ENCODE measurements at regions of chr17 and their contacts with region 1.

Region 1: GRCh38 chr17:78082988-78083387 is 45.6 kb downstream of the TMC6 start:
- DNase-seq: no peak
- ATAC-seq: no peak
- H3K4me3 ChIP-seq: no peak overlapping the region
- H3K27ac ChIP-seq: no peak overlapping the region
- H3K4me1 ChIP-seq: no peaks in the 10 kb centered on the region
- H3K27me3 ChIP-seq: no peaks in the 10 kb centered on the region
- CTCF ChIP-seq: no peak
- EP300 ChIP-seq: no peak
- POLR2A ChIP-seq: no peak
- RAD21 ChIP-seq: no peak

Region 2: GRCh38 chr17:77744066-77744988 is 338.7 kb before region 1 on chr17:
- CTCF ChIA-PET with region 1: no interaction called
- POLR2A ChIA-PET with region 1: no interaction called
- RAD21 ChIA-PET with region 1: no interaction called
- SMC1A ChIA-PET with region 1: no interaction called
- in situ Hi-C with region 1: no loop called
- intact Hi-C with region 1: no loop called
- DNase-seq: no peak
- ATAC-seq: no peak
- H3K4me3 ChIP-seq: no peak overlapping the region
- H3K27ac ChIP-seq: no peak overlapping the region
- H3K4me1 ChIP-seq: no peaks in the 10 kb centered on the region
- H3K27me3 ChIP-seq: no peaks in the 10 kb centered on the region; a peak in 1 of 4 replicates
- CTCF ChIP-seq: no peak
- EP300 ChIP-seq: no peak
- POLR2A ChIP-seq: no peak
- RAD21 ChIP-seq: no peak

Region 3: GRCh38 chr17:77957857-77958715 is 124.9 kb before region 1 on chr17 and contains the start of gene TNRC6C:
- CTCF ChIA-PET with region 1: no interaction called
- POLR2A ChIA-PET with region 1: no interaction called
- RAD21 ChIA-PET with region 1: no interaction called
- SMC1A ChIA-PET with region 1: no interaction called
- in situ Hi-C with region 1: no loop called
- intact Hi-C with region 1: no loop called
- DNase-seq: peak; percentile 87
- ATAC-seq: peak; percentile 96
- H3K4me3 ChIP-seq: peak within 1 kb of the TSS; percentile 75
- H3K27ac ChIP-seq: no peak within 1 kb of the TSS
- H3K4me1 ChIP-seq: peaks cover 16% of the 10 kb centered on the region
- H3K27me3 ChIP-seq: peaks cover 0 to 3% of the 10 kb centered on the region in 2 experiments; a peak in 2 of 4 replicates
- CTCF ChIP-seq: peak in 2 of 3 experiments; percentile 20 to 38; a peak in 3 of 6 replicates
- EP300 ChIP-seq: no peak; a peak in 2 of 4 replicates
- POLR2A ChIP-seq: peak; percentile 100
- RAD21 ChIP-seq: no peak
- polyA plus RNA-seq, gene TNRC6C: 0.40 to 0.43 TPM

Region 4: DNA sequence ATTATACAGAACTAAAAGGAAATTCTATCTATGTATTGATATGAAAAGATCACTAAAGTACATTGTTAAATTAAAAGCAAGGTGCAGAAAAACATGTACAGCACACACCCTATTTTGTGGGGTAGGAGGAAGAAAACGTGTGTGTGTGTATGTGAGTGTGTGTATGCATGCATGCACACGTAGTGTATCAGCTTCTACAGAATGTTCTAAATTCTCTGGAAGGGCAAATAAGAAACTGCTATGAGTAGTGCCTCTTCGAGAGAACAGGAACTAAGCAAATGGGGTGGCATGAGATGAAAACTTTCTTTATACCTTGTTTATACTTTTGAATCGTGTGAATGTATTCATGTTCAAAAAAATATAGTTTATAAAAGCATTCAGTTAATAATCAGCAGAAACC is 13.3 kb before region 1 on chr17:
- CTCF ChIA-PET with region 1: interaction called, 18 read pairs
- POLR2A ChIA-PET with region 1: no interaction called
- RAD21 ChIA-PET with region 1: no interaction called
- SMC1A ChIA-PET with region 1: interaction called, 8 read pairs
- in situ Hi-C with region 1: no loop called
- intact Hi-C with region 1: no loop called
- DNase-seq: no peak
- ATAC-seq: no peak
- H3K4me3 ChIP-seq: no peak overlapping the region
- H3K27ac ChIP-seq: no peak overlapping the region
- H3K4me1 ChIP-seq: no peaks in the 10 kb centered on the region
- H3K27me3 ChIP-seq: no peaks in the 10 kb centered on the region
- CTCF ChIP-seq: no peak
- EP300 ChIP-seq: no peak
- POLR2A ChIP-seq: no peak
- RAD21 ChIP-seq: no peak

Region 5: GRCh38 chr17:78107457-78107856 is 24.5 kb after region 1 on chr17:
- CTCF ChIA-PET with region 1: interaction called, 15 read pairs
- POLR2A ChIA-PET with region 1: interaction called, 4 read pairs
- RAD21 ChIA-PET with region 1: interaction called, 5 read pairs
- SMC1A ChIA-PET with region 1: interaction called, 5 read pairs
- in situ Hi-C with region 1: no loop called
- intact Hi-C with region 1: no loop called
- DNase-seq: no peak
- ATAC-seq: no peak
- H3K4me3 ChIP-seq: no peak overlapping the region
- H3K27ac ChIP-seq: no peak overlapping the region
- H3K4me1 ChIP-seq: no peaks in the 10 kb centered on the region
- H3K27me3 ChIP-seq: no peaks in the 10 kb centered on the region
- CTCF ChIP-seq: no peak
- EP300 ChIP-seq: no peak
- POLR2A ChIP-seq: no peak
- RAD21 ChIP-seq: no peak

Region 6: GRCh38 chr17:78140169-78140976 is 57.4 kb after region 1 on chr17:
- CTCF ChIA-PET with region 1: interaction called, 11 read pairs
- POLR2A ChIA-PET with region 1: no interaction called
- RAD21 ChIA-PET with region 1: interaction called, 3 read pairs
- SMC1A ChIA-PET with region 1: interaction called, 7 read pairs
- in situ Hi-C with region 1: no loop called
- intact Hi-C with region 1: no loop called
- DNase-seq: peak; percentile 90
- ATAC-seq: peak; percentile 90
- H3K4me3 ChIP-seq: no peak overlapping the region
- H3K27ac ChIP-seq: no peak overlapping the region
- H3K4me1 ChIP-seq: peaks cover 64% of the 10 kb centered on the region
- H3K27me3 ChIP-seq: no peaks in the 10 kb centered on the region
- CTCF ChIP-seq: no peak
- EP300 ChIP-seq: no peak
- POLR2A ChIP-seq: peak; percentile 87
- RAD21 ChIP-seq: no peak

Region 7: DNA sequence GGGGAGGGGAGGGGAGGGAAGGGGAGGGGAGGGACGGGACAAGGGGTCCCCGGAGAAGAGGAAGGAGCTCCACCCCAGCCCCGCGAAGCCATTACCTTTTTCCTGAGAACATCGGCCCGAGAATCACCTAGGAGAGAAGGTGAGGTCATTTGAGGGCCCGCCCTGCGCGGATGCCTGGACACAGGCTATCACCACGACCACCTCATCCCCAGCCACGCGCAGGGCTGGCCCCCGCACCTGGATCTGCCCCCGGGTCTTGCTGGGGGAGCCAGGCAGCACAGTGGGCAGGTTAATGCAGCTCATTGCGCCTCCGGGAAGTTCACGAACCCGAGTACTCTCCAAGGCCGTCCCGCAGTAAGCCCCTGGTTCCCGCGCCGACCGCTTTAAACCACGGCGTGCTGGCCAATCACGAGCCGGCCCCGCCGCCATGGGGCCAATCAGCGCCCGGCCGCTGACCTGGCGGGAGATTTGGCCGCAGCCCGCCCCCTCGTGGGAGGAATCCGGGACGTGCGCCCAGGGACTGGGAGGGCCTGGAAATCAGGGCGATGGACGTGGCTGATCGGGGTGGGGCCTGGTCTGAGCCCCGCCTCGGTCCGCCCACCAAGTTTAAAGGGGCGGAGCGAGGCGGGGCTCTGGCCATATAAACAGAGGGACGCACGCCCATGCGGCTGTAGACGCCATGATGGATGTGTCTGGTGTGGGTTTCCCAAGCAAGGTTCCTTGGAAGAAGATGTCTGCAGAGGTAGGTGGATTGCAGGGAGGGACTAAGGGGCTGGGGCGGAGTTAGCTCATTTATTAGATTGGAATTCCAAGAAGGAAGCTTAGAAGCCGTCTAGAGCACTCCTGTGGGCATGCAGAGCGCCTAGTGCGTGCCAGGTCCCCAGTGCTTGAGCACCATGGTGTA is 104.0 kb after region 1 on chr17 and contains the starts of genes AFMID and TK1:
- CTCF ChIA-PET with region 1: interaction called, 17 read pairs
- POLR2A ChIA-PET with region 1: no interaction called
- RAD21 ChIA-PET with region 1: interaction called, 7 read pairs
- SMC1A ChIA-PET with region 1: interaction called, 4 read pairs
- in situ Hi-C with region 1: no loop called
- intact Hi-C with region 1: no loop called
- DNase-seq: peak; percentile 87
- ATAC-seq: peak; percentile 95
- H3K4me3 ChIP-seq: peak within 1 kb of the TSS; percentile 96
- H3K27ac ChIP-seq: peak within 1 kb of the TSS; percentile 71
- H3K4me1 ChIP-seq: peaks cover 5% of the 10 kb centered on the region; the same call in 1 of the 2 replicates
- H3K27me3 ChIP-seq: no peaks in the 10 kb centered on the region
- CTCF ChIP-seq: peak; percentile 27 to 56 (median 37); a peak in 3 of 6 replicates
- EP300 ChIP-seq: no peak
- POLR2A ChIP-seq: peak; percentile 94
- RAD21 ChIP-seq: no peak
- polyA plus RNA-seq, gene AFMID: 50.3 to 98.8 TPM
- polyA plus RNA-seq, gene TK1: 4.6 to 13.0 TPM

Region 8: DNA sequence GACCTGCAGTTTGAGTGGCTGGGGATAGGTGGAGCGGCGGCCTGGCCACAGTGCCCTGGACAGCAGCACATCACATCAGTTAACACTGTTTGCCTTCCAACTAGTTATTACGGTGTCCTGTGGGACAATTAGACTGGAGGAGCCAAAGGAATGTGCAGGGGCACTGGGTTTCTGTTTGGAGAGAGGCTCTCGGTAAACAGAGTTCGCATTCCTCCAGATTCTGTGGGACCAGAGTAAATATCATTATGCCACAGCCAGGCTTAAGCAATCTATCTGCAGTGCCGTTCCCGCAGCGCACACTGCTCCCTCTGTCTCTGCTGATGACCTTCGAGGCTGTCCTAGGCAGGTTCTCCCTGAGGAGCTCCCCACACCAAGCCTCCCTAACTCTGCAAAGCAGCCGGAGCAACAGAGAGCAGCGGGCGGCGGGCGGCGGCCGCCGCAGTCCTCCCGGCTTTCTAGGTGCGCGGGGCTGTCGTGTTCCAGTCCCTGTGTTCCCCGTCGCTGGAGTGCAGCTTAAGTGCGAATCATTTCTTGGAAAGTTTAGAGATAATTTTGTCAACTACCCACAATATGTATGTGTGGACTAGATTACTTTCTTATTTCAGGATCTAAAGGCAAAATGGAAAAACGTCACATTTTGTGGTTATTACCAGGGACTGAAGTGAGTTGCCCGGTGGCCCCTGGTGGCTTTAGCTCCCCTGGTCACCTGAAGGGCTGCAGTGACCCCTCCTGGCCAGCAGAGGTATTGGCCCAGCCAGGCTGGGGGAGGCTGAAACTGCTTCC is 338.7 kb after region 1 on chr17:
- CTCF ChIA-PET with region 1: interaction called, 11 read pairs
- POLR2A ChIA-PET with region 1: no interaction called
- RAD21 ChIA-PET with region 1: interaction called, 8 read pairs
- SMC1A ChIA-PET with region 1: interaction called, 6 read pairs
- in situ Hi-C with region 1: no loop called
- intact Hi-C with region 1: loop called (anchors 10 kb)
- DNase-seq: peak; percentile 7
- ATAC-seq: peak; percentile 96
- H3K4me3 ChIP-seq: no peak overlapping the region
- H3K27ac ChIP-seq: no peak overlapping the region
- H3K4me1 ChIP-seq: no peaks in the 10 kb centered on the region; the same call in 1 of the 2 replicates
- H3K27me3 ChIP-seq: no peaks in the 10 kb centered on the region
- CTCF ChIP-seq: peak; percentile 95 to 99 (median 99); a peak in 5 of 6 replicates
- EP300 ChIP-seq: no peak
- POLR2A ChIP-seq: no peak
- RAD21 ChIP-seq: peak; percentile 92

Measured in GM12878 (cell line).